ENCODE measurements at regions of chr1 and their contacts with region 1.

Region 1: GRCh38 chr1:202348509-202349205 is at the start of gene PPP1R12B:
- DNase-seq: peak; percentile 90
- ATAC-seq: peak; percentile 95
- H3K4me3 Mint-ChIP-seq: peak within 1 kb of the TSS; percentile 99
- H3K27ac Mint-ChIP-seq: peak within 1 kb of the TSS; percentile 93
- H3K4me1 Mint-ChIP-seq: peaks cover 25% of the 10 kb centered on the region
- H3K27me3 Mint-ChIP-seq: no peaks in the 10 kb centered on the region
- CTCF ChIP-seq: no peak
- total RNA-seq, gene PPP1R12B: 22.4 and 25.7 TPM in 2 replicates

Region 2: DNA sequence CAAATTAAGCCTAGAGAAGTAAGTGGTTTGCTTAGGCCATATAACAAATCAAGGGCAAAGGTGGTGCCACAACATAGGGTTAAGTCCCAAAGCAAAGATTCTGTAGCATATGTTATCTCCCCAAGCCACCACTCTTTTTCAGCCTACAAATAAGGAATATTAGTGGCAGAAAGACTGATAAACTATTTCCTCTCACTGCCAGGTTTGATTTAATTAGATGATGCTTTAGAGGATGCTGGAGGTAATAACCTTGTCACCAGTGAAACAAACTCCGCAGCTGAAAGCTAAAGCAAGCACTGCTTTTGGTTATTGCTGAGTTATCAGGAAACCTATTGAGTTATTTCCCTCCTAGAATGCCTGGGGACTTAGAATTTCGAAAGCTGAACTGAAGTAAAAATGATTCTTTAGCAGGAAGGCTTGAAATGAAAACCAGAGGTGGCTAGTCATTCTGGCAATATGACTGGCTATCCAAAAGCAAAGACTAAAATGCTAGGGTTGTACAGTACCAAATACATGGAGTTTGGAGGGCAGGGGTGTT is 216.4 kb after region 1 on chr1:
- CTCF ChIA-PET with region 1: no interaction called
- POLR2A ChIA-PET with region 1: no interaction called
- intact Hi-C with region 1: no loop called
- DNase-seq: no peak
- ATAC-seq: no peak
- H3K4me3 Mint-ChIP-seq: no peak overlapping the region
- H3K27ac Mint-ChIP-seq: peak overlapping the region; percentile 46
- H3K4me1 Mint-ChIP-seq: peaks cover 37% of the 10 kb centered on the region
- H3K27me3 Mint-ChIP-seq: no peaks in the 10 kb centered on the region
- CTCF ChIP-seq: no peak

Region 3: DNA sequence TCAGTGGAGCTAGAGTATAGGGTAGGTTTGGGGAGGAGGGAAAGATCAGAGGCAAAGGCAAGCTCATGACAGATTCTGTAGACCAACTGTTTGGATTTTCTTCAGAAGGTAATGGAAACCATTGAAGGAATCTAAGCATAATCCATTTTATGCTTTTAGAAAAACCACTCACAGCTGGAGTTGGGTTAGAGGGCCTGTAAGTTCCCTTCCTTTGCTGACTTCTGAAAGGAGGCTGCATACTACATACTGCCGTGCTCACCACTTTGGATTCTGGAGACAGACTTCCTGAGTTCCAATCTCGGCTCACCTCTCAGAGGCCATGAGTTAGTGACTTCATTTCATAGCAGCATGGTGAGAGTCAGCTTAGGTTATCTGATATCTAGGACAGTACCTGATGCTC is 368.0 kb after region 1 on chr1:
- CTCF ChIA-PET with region 1: interaction called, 16 read pairs
- POLR2A ChIA-PET with region 1: no interaction called
- intact Hi-C with region 1: loop called (anchors 1 kb)
- DNase-seq: no peak
- ATAC-seq: no peak
- H3K4me3 Mint-ChIP-seq: no peak overlapping the region
- H3K27ac Mint-ChIP-seq: no peak overlapping the region
- H3K4me1 Mint-ChIP-seq: peaks cover 2% of the 10 kb centered on the region
- H3K27me3 Mint-ChIP-seq: peaks cover 18% of the 10 kb centered on the region
- CTCF ChIP-seq: no peak

Region 4: DNA sequence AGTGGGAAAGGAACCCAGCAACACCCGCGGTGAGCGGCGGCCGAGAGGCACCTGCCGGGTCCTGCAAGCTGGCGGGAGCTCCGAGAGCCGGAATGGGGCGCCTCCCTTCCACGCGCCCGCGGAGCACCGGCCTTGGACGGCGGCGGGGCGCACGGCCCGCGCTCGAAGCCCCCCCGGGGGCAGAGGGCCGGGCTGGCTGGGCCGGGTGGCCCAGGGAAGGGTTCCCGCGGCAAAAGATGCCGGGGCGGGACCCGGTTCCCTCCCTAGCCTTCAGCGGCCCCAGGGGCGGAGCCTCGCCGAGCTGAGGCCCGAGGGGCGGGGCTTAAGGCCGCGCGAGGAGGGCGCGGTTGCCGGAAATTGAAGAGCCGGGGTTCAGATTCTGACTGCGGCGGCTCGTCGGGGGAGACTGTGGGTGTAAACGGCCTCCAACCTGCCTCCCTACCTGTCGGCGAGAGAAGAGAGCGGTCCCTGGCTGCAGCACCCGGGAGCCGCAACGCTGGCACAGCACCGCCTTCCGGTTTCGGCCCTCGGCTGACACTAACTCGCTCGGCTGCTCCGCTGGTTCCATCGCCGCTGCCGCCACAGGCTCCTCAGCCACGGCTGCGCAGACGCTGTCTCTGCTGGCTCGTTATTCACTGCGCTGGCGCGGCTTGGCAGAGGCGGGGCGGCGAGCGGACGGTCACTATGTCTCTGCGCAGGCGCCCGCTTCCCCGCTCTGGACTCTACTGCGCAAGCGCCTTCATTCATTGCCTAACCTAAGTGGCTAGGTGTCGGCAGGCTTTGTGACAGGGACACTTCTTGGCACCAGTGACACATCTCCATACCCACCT is 540.1 kb after region 1 on chr1 and contains the start of gene RABIF:
- CTCF ChIA-PET with region 1: no interaction called
- POLR2A ChIA-PET with region 1: no interaction called
- intact Hi-C with region 1: loop called (anchors 2 kb)
- DNase-seq: peak; percentile 94
- ATAC-seq: peak; percentile 92
- H3K4me3 Mint-ChIP-seq: peak within 1 kb of the TSS; percentile 96
- H3K27ac Mint-ChIP-seq: peak within 1 kb of the TSS; percentile 98
- H3K4me1 Mint-ChIP-seq: peaks cover 16% of the 10 kb centered on the region
- H3K27me3 Mint-ChIP-seq: no peaks in the 10 kb centered on the region
- CTCF ChIP-seq: no peak
- total RNA-seq, gene RABIF: 10.7 and 13.2 TPM in 2 replicates

Region 5: DNA sequence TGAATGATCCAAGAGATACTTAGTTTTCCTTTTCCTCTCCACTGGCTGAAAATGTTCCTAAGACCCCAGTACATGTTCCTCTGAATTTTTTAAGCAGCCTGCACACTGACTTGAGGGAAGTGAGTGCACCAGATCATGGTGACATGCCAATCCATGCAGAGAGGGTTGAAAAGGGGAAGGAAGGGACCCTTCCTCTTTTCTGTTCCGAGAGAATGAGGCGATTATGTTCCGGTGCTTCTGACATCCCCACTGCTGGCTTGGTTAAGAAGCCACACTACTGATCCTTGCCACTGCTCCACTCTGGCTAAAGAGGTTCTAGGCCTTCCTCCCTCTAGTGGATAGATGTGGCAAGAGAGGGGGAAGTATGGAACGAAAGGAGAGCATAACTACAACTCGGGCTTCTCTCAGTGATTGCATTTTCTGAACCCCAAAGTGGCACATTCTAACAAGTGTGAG is 620.2 kb after region 1 on chr1:
- CTCF ChIA-PET with region 1: no interaction called
- POLR2A ChIA-PET with region 1: no interaction called
- intact Hi-C with region 1: loop called (anchors 2 kb)
- DNase-seq: peak; percentile 30
- ATAC-seq: peak; percentile 65
- H3K4me3 Mint-ChIP-seq: peak overlapping the region; percentile 89
- H3K27ac Mint-ChIP-seq: peak overlapping the region; percentile 88
- H3K4me1 Mint-ChIP-seq: peaks cover 45% of the 10 kb centered on the region
- H3K27me3 Mint-ChIP-seq: no peaks in the 10 kb centered on the region
- CTCF ChIP-seq: no peak

Region 6: GRCh38 chr1:203026031-203026989 is 677.7 kb after region 1 on chr1 and contains the start of gene PPFIA4:
- CTCF ChIA-PET with region 1: no interaction called
- POLR2A ChIA-PET with region 1: no interaction called
- intact Hi-C with region 1: loop called (anchors 2 kb)
- DNase-seq: peak; percentile 87
- ATAC-seq: peak; percentile 97
- H3K4me3 Mint-ChIP-seq: peak within 1 kb of the TSS; percentile 73
- H3K27ac Mint-ChIP-seq: peak within 1 kb of the TSS; percentile 72
- H3K4me1 Mint-ChIP-seq: peaks cover 16% of the 10 kb centered on the region
- H3K27me3 Mint-ChIP-seq: peaks cover 3% of the 10 kb centered on the region
- CTCF ChIP-seq: no peak
- total RNA-seq, gene PPFIA4: 0.12 and 0.29 TPM in 2 replicates